ENCODE measurements at regions of chr12 and their contacts with region 1.

Region 1: DNA sequence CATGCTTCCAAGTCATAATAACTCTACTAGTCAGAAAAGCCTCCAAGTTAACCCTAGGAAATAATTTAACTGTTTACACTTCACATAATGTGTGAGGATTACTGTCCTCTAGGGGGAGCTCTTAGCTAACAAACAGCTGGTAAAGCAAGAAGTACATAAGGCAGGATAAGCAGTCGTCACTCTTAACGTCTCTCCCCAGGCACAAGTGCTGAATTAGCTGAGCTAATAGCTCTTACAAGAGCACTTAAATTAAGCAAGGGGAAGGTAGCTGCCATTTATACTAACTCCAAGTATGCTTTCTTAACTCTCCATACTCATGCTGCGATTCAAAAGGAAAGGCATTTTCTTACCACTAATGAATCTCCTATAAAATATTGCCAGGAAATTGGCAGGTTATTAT is 79.3 kb upstream of the TSPAN11 start:
- DNase-seq: peak; percentile 13
- H3K4me3 Mint-ChIP-seq: no peak overlapping the region
- H3K27ac Mint-ChIP-seq: no peak overlapping the region
- H3K4me1 Mint-ChIP-seq: peaks cover 15% of the 10 kb centered on the region
- H3K27me3 Mint-ChIP-seq: peaks cover 7% of the 10 kb centered on the region

Region 2: GRCh38 chr12:29519585-29520182 is 1327.6 kb before region 1 on chr12:
- intact Hi-C with region 1: loop called (anchors 1 kb)
- DNase-seq: no peak
- H3K4me3 Mint-ChIP-seq: no peak overlapping the region
- H3K27ac Mint-ChIP-seq: no peak overlapping the region
- H3K4me1 Mint-ChIP-seq: no peaks in the 10 kb centered on the region
- H3K27me3 Mint-ChIP-seq: no peaks in the 10 kb centered on the region

Region 3: GRCh38 chr12:29552324-29552927 is 1294.8 kb before region 1 on chr12:
- intact Hi-C with region 1: loop called (anchors 1 kb)
- DNase-seq: peak; percentile 39
- H3K4me3 Mint-ChIP-seq: no peak overlapping the region
- H3K27ac Mint-ChIP-seq: no peak overlapping the region
- H3K4me1 Mint-ChIP-seq: no peaks in the 10 kb centered on the region
- H3K27me3 Mint-ChIP-seq: peaks cover 1% of the 10 kb centered on the region

Region 4: GRCh38 chr12:30828686-30829085 is 18.6 kb before region 1 on chr12:
- intact Hi-C with region 1: no loop called
- DNase-seq: no peak
- H3K4me3 Mint-ChIP-seq: no peak overlapping the region
- H3K27ac Mint-ChIP-seq: no peak overlapping the region
- H3K4me1 Mint-ChIP-seq: no peaks in the 10 kb centered on the region
- H3K27me3 Mint-ChIP-seq: peaks cover 25% of the 10 kb centered on the region

Region 5: GRCh38 chr12:30985814-30986452 is 138.7 kb after region 1 on chr12:
- intact Hi-C with region 1: loop called (anchors 1 kb)
- DNase-seq: no peak
- H3K4me3 Mint-ChIP-seq: no peak overlapping the region
- H3K27ac Mint-ChIP-seq: no peak overlapping the region
- H3K4me1 Mint-ChIP-seq: no peaks in the 10 kb centered on the region
- H3K27me3 Mint-ChIP-seq: no peaks in the 10 kb centered on the region

Region 6: GRCh38 chr12:31117203-31118011 is 270.1 kb after region 1 on chr12:
- intact Hi-C with region 1: loop called (anchors 5 kb)
- DNase-seq: peak; percentile 24
- H3K4me3 Mint-ChIP-seq: peak overlapping the region; percentile 57
- H3K27ac Mint-ChIP-seq: no peak overlapping the region
- H3K4me1 Mint-ChIP-seq: no peaks in the 10 kb centered on the region
- H3K27me3 Mint-ChIP-seq: peaks cover 25% of the 10 kb centered on the region

Region 7: DNA sequence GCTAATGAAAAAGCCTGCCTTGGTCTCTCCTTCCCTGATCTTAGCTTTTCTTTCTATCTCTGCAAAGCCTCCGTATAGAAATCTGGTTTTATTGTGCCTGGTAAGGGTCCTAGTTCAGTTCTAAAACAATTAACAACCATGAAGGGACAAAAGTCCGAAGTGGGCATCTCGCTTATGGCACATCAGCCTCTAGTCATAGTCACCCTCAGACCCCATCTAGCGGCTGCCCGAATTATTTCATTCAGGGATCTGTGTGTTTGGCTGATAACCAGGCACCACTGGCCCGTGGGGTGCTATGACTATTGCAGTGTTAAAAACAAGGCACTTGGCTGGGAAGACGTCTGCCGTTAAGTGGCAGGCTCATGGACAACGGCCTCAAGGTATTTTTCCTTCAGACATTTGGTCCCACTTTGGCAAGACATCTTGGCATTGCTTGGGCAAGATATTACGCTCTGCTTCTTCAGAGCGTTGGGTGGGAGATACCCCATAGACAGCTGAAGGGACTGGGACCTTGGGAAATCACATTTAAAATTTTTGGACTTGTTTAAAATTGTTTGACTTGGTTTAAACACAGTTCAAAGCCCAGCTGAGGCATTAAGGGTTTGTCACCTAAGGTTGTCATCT is 391.6 kb after region 1 on chr12:
- intact Hi-C with region 1: loop called (anchors 1 kb)
- DNase-seq: peak; percentile 36
- H3K4me3 Mint-ChIP-seq: no peak overlapping the region
- H3K27ac Mint-ChIP-seq: no peak overlapping the region
- H3K4me1 Mint-ChIP-seq: peaks cover 5% of the 10 kb centered on the region
- H3K27me3 Mint-ChIP-seq: peaks cover 14% of the 10 kb centered on the region

Region 8: DNA sequence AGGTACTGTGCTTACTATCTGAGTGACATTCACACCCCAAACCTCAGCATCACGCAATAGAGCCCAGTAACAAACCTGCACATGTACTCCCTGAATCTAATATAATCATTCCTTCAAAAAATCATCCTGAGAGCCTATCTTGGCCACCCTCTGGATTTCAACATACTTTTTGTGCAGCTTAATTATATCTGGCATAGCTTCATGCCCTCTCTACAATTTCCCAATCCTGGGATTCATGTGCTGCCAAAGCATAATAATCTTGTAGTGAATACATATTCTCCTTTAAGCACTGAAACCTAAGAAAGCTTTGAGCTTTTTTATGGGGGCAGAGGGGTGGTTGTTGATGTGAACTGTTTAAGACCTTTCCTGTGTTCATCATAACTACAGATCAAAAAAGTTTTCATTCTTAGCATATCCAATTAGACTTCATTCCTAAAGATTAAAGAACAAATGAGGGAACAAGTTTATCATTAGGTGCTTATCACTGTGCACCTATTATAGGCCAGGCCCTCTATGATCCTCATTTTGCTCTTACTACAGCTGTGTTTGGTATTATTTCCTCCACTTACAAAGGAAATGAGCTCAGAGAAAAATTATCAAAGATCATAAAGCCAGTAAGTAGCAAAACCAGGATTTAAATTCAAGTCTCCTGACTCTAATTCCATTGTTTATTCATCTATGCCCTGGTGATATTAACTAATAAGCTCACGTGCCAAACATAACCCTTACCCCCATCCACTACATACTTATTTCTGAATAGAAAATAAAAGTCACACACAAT is 427.5 kb after region 1 on chr12:
- intact Hi-C with region 1: loop called (anchors 10 kb)
- DNase-seq: no peak
- H3K4me3 Mint-ChIP-seq: no peak overlapping the region
- H3K27ac Mint-ChIP-seq: peak overlapping the region; percentile 25
- H3K4me1 Mint-ChIP-seq: no peaks in the 10 kb centered on the region
- H3K27me3 Mint-ChIP-seq: no peaks in the 10 kb centered on the region

Measured in activated T-helper 2 cell treated with anti-CD3 and anti-CD28 coated beads, Interferon-gamma antibody, Interleukin-2, Interleukin-4, amounts not matched to agents 10 μg/mL and 5 μg/mL and 100 μg/mL, durations not matched to agents 14 hours and 24 hours and 36 hours (primary cell).